Caco-2 (cell line): ENCODE measurements at regions of chr17 and their contacts with region 1.

Region 1: GRCh38 chr17:48011405-48012150 is 26.0 kb downstream of the COPZ2 start:
- DNase-seq: peak; percentile 83
- H3K4me3 ChIP-seq: peak overlapping the region; percentile 48
- H3K4me3 Mint-ChIP-seq: peak overlapping the region; percentile 70
- H3K27ac Mint-ChIP-seq: no peak overlapping the region
- H3K4me1 ChIP-seq: peaks cover 5% of the 10 kb centered on the region
- H3K4me1 Mint-ChIP-seq: peaks cover 6% of the 10 kb centered on the region
- H3K27me3 ChIP-seq: no peaks in the 10 kb centered on the region
- H3K27me3 Mint-ChIP-seq: peaks cover 4% of the 10 kb centered on the region
- CTCF ChIP-seq: peak; percentile 95 to 97

Region 2: DNA sequence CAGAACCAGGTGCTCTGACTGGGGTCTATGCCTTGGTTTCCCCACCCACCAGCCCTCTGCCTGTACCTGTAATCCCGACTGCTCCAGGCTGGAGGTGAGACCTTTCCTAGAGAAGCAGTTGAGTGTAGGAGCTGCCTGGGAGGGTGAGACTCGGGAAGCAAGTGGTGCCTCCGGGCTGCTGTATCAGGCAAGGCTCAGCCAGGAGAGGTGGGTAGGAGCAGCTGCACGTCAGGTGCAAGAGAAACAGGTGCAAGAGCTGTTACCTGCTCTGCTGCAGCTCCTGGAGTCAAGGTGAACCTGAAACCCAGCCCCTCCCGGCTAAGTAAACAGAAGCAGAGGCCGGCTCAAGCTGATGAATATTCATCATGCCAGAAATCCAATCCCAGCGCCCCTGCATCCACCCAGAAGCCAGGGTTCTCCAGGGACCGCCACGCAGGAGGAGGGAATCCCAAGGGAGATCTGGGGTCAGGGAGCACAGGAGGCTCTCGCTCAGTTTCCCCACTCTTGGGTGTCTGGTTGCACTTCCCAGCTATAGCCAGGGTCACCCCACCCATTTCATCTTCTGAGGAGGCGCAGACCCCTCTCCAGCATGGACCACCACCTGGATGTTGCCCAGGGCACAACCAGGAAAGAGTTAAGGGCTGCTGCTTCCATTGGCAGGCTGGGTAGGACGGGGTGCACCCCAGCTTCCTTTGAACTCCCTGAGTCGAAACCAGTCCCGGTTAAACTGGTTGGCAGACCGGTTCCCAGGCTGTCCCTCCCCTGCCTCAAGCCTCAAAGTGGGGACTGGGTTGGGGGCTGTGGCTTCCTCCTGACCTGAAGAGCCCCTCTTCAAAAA is 53.8 kb before region 1 on chr17 and contains the start of gene PRR15L:
- CTCF ChIA-PET with region 1: interaction called, 18 read pairs
- POLR2A ChIA-PET with region 1: no interaction called
- intact Hi-C with region 1: no loop called
- DNase-seq: peak; percentile 89 to 93
- H3K4me3 ChIP-seq: peak within 1 kb of the TSS; percentile 59
- H3K4me3 Mint-ChIP-seq: peak within 1 kb of the TSS; percentile 67
- H3K27ac Mint-ChIP-seq: peak within 1 kb of the TSS; percentile 35
- H3K4me1 ChIP-seq: peaks cover 67% of the 10 kb centered on the region
- H3K4me1 Mint-ChIP-seq: peaks cover 53% of the 10 kb centered on the region
- H3K27me3 ChIP-seq: no peaks in the 10 kb centered on the region
- H3K27me3 Mint-ChIP-seq: no peaks in the 10 kb centered on the region
- CTCF ChIP-seq: no peak
- total RNA-seq, gene PRR15L: 24.3 and 30.5 TPM in 2 replicates

Region 3: DNA sequence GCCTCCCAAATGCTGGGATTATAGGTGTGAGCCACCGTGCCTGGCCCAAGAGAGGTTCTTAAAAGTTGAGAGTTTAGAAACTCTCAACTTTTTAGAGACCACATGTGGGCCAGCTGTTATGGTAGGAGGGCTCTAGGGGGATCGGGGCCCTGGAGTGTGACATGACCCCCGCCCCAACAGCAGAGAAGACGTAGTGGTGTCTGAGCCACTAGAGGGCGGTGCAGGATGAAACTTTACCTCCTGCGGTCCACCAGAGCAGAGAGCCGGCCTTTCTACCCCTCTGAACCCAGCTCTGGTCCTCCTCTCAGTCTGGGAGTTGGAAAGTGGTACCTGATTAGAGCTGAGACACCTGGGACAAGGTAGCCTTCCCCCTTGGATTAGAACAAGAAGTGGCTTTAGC is 33.3 kb before region 1 on chr17:
- CTCF ChIA-PET with region 1: interaction called, 15 read pairs
- POLR2A ChIA-PET with region 1: no interaction called
- intact Hi-C with region 1: loop called (anchors 1 kb)
- DNase-seq: peak; percentile 80 to 85
- H3K4me3 ChIP-seq: no peak overlapping the region
- H3K4me3 Mint-ChIP-seq: no peak overlapping the region
- H3K27ac Mint-ChIP-seq: no peak overlapping the region
- H3K4me1 ChIP-seq: no peaks in the 10 kb centered on the region
- H3K4me1 Mint-ChIP-seq: no peaks in the 10 kb centered on the region
- H3K27me3 ChIP-seq: no peaks in the 10 kb centered on the region
- H3K27me3 Mint-ChIP-seq: no peaks in the 10 kb centered on the region
- CTCF ChIP-seq: peak; percentile 97 to 98

Region 4: GRCh38 chr17:48001197-48001596 is 10.4 kb before region 1 on chr17:
- CTCF ChIA-PET with region 1: interaction called, 6 read pairs
- POLR2A ChIA-PET with region 1: no interaction called
- intact Hi-C with region 1: loop called (anchors 2 kb)
- DNase-seq: no peak
- H3K4me3 ChIP-seq: no peak overlapping the region
- H3K4me3 Mint-ChIP-seq: no peak overlapping the region
- H3K27ac Mint-ChIP-seq: no peak overlapping the region
- H3K4me1 ChIP-seq: peaks cover 9% of the 10 kb centered on the region
- H3K4me1 Mint-ChIP-seq: peaks cover 11% of the 10 kb centered on the region
- H3K27me3 ChIP-seq: no peaks in the 10 kb centered on the region
- H3K27me3 Mint-ChIP-seq: no peaks in the 10 kb centered on the region
- CTCF ChIP-seq: no peak